ENCODE measurements at regions of chr19 and their contacts with region 1.

Region 1: DNA sequence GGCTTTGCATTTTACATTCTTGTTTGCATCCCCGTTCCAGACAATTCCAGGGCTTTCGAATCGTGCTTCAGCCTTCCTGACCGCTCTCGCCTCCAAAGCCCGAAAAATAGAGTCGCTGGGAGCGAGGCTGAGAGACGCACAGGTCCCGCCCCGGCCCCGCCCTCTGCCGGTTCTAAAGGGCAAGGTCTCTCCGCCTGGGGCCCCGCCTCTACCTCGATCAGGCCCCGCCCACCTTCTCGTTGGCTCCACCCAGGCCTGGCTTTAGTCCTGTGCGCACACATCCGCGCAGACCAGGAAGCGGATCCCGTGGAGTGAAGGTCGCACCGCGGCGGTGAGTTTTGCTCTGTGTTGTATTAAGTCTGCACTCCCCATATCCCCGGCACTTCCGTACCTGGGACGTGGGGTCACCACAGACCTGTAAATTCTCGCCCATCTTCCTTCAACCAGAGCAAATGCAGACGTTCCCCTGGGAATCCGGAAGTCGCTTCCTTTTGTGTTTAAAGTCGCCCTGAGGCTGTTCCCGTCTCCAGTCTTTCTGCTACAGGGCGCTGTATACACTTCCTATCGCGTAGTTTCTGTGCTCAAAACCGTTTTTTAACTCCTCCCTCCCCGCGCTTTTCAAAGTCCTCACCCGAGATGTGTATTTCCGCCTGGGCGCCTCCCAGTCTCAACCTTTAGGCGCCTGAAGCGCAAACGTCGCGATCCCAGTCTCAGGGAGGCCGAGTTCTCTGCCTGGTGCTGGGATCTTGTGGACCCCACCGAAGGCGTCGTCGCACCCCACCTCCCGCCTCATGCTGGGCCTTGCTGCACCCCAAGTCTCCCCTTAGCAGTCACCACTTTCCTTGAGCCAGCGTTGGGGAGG is at the start of gene ZNF701:
- DNase-seq: peak; percentile 98
- ATAC-seq: peak; percentile 100
- total RNA-seq, gene ZNF701: 16.6 TPM

Region 2: GRCh38 chr19:52527134-52527955 is 42.9 kb before region 1 on chr19 and contains the start of gene ZNF808:
- intact Hi-C with region 1: loop called (anchors 1 kb)
- DNase-seq: peak; percentile 99
- ATAC-seq: peak; percentile 98
- total RNA-seq, gene ZNF808: 30.9 TPM

Measured in Right ventricle myocardium inferior (tissue), 1 donor.